Mammary epithelial cell (primary cell): ENCODE measurements at regions of chr11 and their contacts with region 1.

Region 1: GRCh38 chr11:73184953-73185671 is 33.0 kb upstream of the P2RY2 start:
- DNase-seq: peak; percentile 77
- H3K4me3 ChIP-seq: peak overlapping the region in 1 of 3 experiments; percentile 3
- H3K27ac ChIP-seq: peak overlapping the region; percentile 60
- H3K4me1 ChIP-seq: peaks cover 38% of the 10 kb centered on the region
- H3K27me3 ChIP-seq: no peaks in the 10 kb centered on the region
- CTCF ChIP-seq: peak; percentile 99 to 100

Region 2: DNA sequence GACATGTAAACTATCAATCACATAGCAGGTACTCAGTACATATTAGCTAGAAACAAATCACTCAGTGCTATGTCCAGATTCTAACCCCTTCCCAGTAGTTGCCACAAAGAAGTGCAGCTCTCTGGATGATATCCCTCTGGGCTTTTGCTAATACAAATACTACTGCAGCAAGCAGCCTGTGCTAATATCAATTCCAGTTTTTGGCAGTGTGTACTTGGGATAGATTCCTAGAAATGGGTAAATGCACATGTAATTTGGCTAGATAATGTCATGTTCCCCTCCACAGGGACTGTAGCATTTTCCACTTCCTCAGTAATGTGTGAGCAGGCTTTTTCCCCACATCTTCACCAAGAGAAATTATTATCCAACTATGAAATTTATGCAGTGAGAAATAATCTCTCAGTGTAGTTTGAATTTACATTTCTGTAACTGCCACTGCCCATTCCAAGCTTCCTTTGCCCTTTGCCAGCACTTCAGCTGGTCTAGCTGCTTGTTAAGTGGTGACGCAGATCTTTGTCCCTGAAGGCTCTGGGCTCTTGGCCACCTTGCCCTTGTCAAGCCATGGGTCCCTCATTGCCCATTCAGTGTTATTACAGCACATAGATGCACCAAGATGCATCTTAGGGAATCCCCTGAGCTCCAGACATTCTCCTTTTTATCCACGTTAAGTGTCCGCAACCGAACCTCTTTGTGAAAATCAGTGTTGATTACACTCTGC is 643.7 kb before region 1 on chr11:
- CTCF ChIA-PET with region 1: no interaction called
- dilution Hi-C with region 1: no loop called
- in situ Hi-C with region 1: no loop called
- intact Hi-C with region 1: no loop called
- DNase-seq: no peak
- H3K4me3 ChIP-seq: no peak overlapping the region
- H3K27ac ChIP-seq: no peak overlapping the region
- H3K4me1 ChIP-seq: no peaks in the 10 kb centered on the region
- H3K27me3 ChIP-seq: no peaks in the 10 kb centered on the region
- CTCF ChIP-seq: no peak

Region 3: DNA sequence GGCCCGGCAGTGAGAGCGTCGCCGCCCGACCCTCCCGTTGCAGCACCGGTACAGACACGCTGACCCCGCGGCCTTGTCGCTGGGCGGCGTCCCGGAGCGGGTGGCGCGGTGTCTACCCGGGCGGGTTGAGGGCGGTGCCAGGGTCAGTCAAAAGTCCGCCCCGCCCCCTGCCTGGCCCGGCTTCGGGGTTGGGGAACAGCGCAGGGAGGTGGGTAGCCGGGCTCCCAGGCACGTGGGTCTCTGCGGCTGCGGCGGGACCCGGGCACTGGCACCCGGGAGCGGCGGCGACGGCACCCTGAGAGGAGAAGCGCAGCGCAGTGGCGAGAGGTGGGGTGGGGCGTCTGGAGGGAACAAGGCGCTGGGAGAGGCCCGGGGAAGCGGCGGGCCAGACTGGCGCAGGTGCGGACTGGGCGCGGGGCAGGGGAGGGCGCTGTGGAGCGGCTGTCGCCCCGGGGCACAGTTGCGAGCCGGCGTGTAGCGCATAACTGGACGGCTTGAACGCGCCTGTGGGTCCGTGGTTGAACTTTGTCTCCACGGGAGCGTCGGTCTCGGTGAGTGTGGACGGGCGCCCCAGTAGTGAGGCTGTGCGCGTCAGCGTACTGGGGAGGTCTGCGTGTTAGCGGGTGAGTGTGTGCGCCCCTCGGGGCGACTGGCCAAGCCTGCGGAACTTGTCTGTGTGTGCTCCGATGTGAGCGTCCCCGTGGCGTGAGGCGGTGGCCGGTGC is 33.2 kb after region 1 on chr11 and contains the start of gene P2RY2:
- CTCF ChIA-PET with region 1: no interaction called
- dilution Hi-C with region 1: no loop called
- in situ Hi-C with region 1: no loop called
- intact Hi-C with region 1: loop called (anchors 1 kb)
- DNase-seq: peak; percentile 52
- H3K4me3 ChIP-seq: peak within 1 kb of the TSS; percentile 52 to 83 (median 79)
- H3K27ac ChIP-seq: no peak within 1 kb of the TSS
- H3K4me1 ChIP-seq: peaks cover 44% of the 10 kb centered on the region
- H3K27me3 ChIP-seq: no peaks in the 10 kb centered on the region
- CTCF ChIP-seq: peak; percentile 33 to 66
- total RNA-seq, gene P2RY2: 7.8 to 21.6 TPM

Region 4: GRCh38 chr11:73242251-73243079 is 57.4 kb after region 1 on chr11:
- CTCF ChIA-PET with region 1: interaction called, 18 read pairs
- dilution Hi-C with region 1: no loop called
- in situ Hi-C with region 1: loop called (anchors 5 kb)
- intact Hi-C with region 1: loop called (anchors 1 kb)
- DNase-seq: peak; percentile 63
- H3K4me3 ChIP-seq: no peak overlapping the region
- H3K27ac ChIP-seq: no peak overlapping the region
- H3K4me1 ChIP-seq: peaks cover 45% of the 10 kb centered on the region
- H3K27me3 ChIP-seq: no peaks in the 10 kb centered on the region
- CTCF ChIP-seq: peak; percentile 96 to 99

Region 5: DNA sequence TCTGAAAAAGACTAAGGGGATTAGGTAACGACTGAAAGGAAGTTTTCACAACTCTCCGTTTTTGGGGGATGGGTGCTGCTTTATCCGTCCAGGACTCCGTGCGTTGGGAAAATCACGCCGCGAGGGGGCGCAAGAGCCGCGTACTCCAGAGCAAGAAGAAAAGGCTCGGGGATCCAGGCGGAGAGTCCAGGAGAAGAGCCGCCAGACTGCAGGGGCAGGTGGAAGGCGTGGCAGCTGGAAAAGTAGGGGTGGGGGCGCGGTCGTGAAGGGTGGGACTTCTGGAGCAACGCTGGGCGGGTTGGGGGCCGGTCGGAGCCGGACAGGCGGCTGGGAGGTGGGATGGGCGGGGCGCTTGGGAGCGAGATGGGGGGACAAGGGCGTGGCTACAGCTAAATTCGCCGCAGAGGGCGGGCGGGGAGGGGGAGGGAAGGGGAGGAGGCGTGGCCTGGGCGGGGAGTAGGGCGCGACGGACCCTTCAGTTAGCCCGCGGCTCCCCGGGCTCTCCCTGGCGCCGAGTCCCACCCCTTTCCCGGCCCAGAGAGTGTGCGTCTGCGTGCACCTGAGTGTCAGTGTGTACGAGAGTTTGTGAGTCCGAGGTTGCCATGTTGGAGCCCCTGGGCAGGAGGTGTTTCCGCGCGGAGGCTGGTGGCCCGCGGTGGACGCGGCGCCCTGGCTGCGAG is 122.4 kb after region 1 on chr11:
- CTCF ChIA-PET with region 1: interaction called, 14 read pairs
- dilution Hi-C with region 1: no loop called
- in situ Hi-C with region 1: no loop called
- intact Hi-C with region 1: no loop called
- DNase-seq: peak; percentile 94
- H3K4me3 ChIP-seq: peak overlapping the region; percentile 54 to 65 (median 57)
- H3K27ac ChIP-seq: peak overlapping the region; percentile 45
- H3K4me1 ChIP-seq: peaks cover 43% of the 10 kb centered on the region
- H3K27me3 ChIP-seq: no peaks in the 10 kb centered on the region
- CTCF ChIP-seq: peak; percentile 69 to 91